ENCODE measurements at regions of chr4 and their contacts with region 1.

Region 1: GRCh38 chr4:173019711-173020110 is 148.9 kb upstream of the GALNT7 start:
- DNase-seq: no peak
- ATAC-seq: no peak
- H3K4me3 ChIP-seq: no peak overlapping the region
- H3K27ac ChIP-seq: no peak overlapping the region
- H3K4me1 ChIP-seq: peaks cover 0 to 3% (median 0%) of the 10 kb centered on the region in 9 donors
- H3K27me3 ChIP-seq: no peaks in the 10 kb centered on the region
- CTCF ChIP-seq: no peak

Region 2: DNA sequence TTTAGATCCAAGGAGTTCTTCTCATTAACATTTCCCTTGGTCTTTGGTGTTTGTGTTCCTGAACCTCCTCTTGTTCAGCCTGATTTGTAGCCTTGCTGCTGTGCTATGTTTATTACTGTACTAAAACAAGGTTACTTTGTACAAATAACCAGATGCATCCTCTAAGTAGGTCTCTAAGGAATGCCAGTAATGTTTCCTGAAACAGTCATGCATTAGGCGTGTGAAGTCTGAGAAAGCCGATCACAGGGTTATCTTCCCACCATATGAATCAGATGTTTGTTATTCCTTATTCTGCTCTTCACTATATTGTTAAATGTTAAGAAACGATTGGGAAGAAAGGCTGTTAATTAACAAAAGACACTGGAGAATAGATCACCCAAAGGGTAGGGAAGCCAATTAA is 1139.6 kb before region 1 on chr4:
- intact Hi-C with region 1: no loop called
- DNase-seq: no peak
- ATAC-seq: no peak
- H3K4me3 ChIP-seq: no peak overlapping the region
- H3K27ac ChIP-seq: no peak overlapping the region
- H3K4me1 ChIP-seq: no peaks in the 10 kb centered on the region
- H3K27me3 ChIP-seq: no peaks in the 10 kb centered on the region
- CTCF ChIP-seq: no peak

Region 3: DNA sequence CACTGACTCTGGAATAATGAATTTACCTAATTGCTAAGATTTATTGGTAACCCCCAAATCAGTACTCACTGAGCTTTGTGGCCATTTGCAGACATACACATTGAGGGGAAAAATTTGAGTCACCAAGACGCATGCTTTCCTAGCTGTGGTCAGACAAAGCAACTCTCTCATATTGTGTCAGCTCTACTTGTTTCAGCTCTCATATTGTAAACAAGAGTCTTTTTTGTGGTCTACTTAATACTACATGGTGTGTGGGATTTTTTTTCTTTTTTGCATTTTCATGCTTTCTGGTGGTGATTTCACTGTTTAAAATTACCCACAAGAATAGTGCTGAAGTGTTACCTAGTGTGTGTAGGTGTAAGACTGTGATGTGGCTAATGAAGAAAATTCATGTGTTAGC is 279.3 kb before region 1 on chr4:
- intact Hi-C with region 1: no loop called
- DNase-seq: no peak
- ATAC-seq: no peak
- H3K4me3 ChIP-seq: no peak overlapping the region
- H3K27ac ChIP-seq: no peak overlapping the region
- H3K4me1 ChIP-seq: no peaks in the 10 kb centered on the region
- H3K27me3 ChIP-seq: no peaks in the 10 kb centered on the region
- CTCF ChIP-seq: no peak

Region 4: DNA sequence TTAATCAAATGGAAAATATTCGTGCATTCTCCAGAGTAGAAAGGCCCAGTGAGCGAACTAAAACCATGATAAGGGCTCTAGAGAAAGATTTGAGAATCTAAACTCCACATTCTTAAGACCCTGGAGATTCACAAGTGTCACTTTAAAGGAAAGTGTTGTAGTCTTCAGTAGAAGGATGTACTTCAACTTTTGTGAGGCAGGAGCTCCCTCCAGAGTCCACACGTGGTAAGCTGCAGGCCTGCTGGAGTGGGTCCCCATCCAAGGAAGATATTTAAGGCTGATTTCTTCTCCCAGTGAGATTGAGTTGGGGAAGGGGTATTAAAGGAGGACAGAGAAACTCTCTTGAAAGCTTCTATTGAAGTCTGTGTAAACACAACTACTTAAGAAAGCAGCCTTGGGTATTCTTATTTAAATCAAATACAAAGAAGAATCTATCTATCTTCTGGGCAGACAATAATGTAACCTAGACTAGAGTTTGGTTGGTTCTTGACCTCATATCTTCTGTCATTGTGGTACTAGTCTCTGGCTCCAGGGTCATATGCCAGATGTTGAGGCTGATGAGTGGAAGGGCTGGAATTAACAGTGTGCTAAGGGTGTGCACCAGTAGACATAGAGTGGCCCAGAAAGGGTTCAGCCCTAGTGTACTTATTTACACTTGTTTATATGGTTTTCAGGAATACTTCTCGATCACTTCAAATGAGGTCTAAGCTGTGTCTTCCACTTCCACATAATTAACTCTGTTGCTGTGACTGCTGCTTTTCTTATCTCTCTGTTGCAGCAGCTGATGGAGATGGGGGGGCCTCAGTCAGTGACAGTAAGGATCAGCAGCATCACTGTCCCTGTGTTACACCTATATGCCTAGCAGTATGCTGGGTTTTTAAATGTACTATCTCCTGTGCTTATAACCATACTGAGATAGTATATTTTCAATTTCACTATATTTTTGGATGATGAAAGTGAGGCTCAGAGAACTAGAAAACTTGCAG is 238.3 kb after region 1 on chr4:
- intact Hi-C with region 1: loop called in 7 of 10 experiments (anchors 2 to 5 kb)
- DNase-seq: peak; percentile 33 to 61
- ATAC-seq: peak; percentile 78 to 97 (median 92)
- H3K4me3 ChIP-seq: no peak overlapping the region
- H3K27ac ChIP-seq: no peak overlapping the region
- H3K4me1 ChIP-seq: peaks cover 0 to 3% (median 0%) of the 10 kb centered on the region in 9 donors
- H3K27me3 ChIP-seq: no peaks in the 10 kb centered on the region
- CTCF ChIP-seq: peak; percentile 47 to 92 (median 77)

Measured in heart right ventricle (tissue), 16 donors.